ENCODE measurements at regions of chr18 and their contacts with region 1.

Region 1: GRCh38 chr18:27404909-27405308 is 219.8 kb upstream of the CHST9 start:
- DNase-seq: no peak

Region 2: DNA sequence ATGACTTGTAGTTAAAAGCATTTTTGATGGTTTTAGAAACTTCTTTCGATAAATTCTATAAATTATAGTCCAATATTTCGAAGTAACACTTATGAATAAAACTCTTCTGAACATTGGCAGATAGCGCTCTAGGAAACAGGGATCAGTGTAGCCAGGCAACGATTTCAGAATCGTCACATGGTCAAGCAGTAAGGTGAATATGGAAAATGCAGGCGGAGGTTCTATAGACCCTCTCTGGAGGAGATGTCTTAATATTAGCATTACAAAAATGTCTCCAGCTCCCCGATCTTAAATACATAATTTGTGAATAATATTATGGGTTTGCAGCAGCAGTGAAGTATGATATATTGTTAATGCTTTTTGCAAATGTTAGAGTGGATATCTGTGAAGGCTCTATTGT is 1624.8 kb before region 1 on chr18:
- intact Hi-C with region 1: loop called in 1 of 2 experiments (anchors 5 kb)
- DNase-seq: no peak

Region 3: DNA sequence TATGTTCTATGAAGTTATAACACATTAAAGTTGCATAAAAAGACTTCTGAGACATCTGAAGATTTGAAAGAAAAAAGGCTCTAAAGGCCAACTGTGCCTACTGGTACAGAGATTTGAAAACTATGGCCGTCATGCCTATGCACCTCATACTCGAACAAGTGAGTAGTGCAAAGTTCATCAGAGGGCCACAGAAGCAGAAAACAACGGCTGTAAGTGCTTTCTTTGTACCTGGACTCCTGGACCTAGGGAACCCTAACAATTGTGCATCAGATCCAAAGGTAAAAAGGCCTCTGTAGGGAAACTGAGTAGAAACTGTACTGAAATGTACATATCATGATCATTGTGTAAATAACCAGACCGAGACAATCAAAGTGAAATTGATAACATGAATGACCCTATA is 10.6 kb after region 1 on chr18:
- intact Hi-C with region 1: no loop called
- DNase-seq: no peak